ENCODE measurements at regions of chr1 and their contacts with region 1.

Region 1: GRCh38 chr1:10867138-10867721 is 70.8 kb upstream of the CASZ1 start:
- DNase-seq: peak; percentile 37 to 66
- ATAC-seq: peak; percentile 56 to 84 (median 71)
- H3K4me3 ChIP-seq: peak overlapping the region; percentile 6 to 52 (median 44)
- H3K27ac ChIP-seq: no peak overlapping the region
- H3K4me1 ChIP-seq: peaks cover 6 to 35% (median 17%) of the 10 kb centered on the region in 9 donors
- H3K27me3 ChIP-seq: peaks cover 0 to 81% (median 38%) of the 10 kb centered on the region in 7 donors
- CTCF ChIP-seq: peak; percentile 55 to 93 (median 80)

Region 2: DNA sequence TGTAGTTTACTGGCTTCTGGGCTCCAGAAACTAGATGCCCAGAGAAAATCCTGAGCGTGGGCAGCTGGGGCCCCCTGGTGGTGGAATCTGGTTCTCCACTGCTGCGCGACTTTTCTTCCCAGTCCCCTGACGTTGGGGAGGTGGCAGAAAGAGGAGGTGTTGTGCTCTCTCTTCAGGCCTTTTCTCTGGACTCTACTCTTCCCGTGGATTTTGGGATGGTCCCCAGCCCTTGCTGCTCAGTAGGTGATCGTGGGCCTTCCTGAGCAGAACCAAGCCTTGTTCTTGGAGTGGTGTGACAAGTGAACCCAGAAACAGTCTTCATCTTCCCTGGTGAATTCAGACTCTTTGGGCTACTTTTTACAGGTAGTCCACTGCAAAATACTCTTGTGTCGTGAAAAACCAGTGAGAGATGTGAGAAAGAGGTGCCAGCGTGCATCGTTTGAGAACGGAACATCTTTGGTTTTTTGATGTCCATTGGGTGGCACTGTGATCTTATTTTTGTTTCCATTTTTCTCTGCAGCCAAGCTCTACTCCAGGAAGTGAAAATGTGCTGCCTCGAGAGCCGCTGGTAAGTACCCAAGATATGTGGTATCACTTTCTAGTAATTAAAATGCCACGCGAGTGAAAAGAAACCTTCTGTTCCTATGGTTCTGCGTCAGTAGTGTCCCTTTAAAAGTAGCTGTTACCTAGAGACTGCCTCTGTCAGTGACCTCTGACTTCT is 372.3 kb before region 1 on chr1:
- intact Hi-C with region 1: loop called in 2 of 10 experiments (anchors 5 kb)
- DNase-seq: peak; percentile 65 to 68
- ATAC-seq: peak; percentile 69 to 92 (median 86)
- H3K4me3 ChIP-seq: peak overlapping the region in 6 of 10 donors; percentile 23 to 47 (median 35)
- H3K27ac ChIP-seq: peak overlapping the region in 6 of 10 donors; percentile 11 to 82 (median 51)
- H3K4me1 ChIP-seq: peaks cover 0 to 36% (median 23%) of the 10 kb centered on the region in 9 donors
- H3K27me3 ChIP-seq: no peaks in the 10 kb centered on the region
- CTCF ChIP-seq: peak; percentile 80 to 92 (median 88)

Region 3: GRCh38 chr1:10514490-10515235 is 352.6 kb before region 1 on chr1:
- intact Hi-C with region 1: loop called in 7 of 10 experiments (anchors 5 kb)
- DNase-seq: no peak
- ATAC-seq: peak in 3 of 8 donors; percentile 42 to 53 (median 43)
- H3K4me3 ChIP-seq: no peak overlapping the region
- H3K27ac ChIP-seq: peak overlapping the region in 1 of 10 donors; percentile 55
- H3K4me1 ChIP-seq: peaks cover 3 to 73% (median 43%) of the 10 kb centered on the region in 9 donors
- H3K27me3 ChIP-seq: no peaks in the 10 kb centered on the region
- CTCF ChIP-seq: peak; percentile 28 to 66 (median 59)

Region 4: GRCh38 chr1:10646347-10646861 is 220.8 kb before region 1 on chr1:
- intact Hi-C with region 1: loop called in 1 of 10 experiments (anchors 10 kb)
- DNase-seq: peak; percentile 54 to 69
- ATAC-seq: peak; percentile 72 to 87 (median 82)
- H3K4me3 ChIP-seq: no peak overlapping the region
- H3K27ac ChIP-seq: peak overlapping the region in 2 of 10 donors; percentile 32 to 53
- H3K4me1 ChIP-seq: peaks cover 0 to 18% (median 0%) of the 10 kb centered on the region in 9 donors
- H3K27me3 ChIP-seq: no peaks in the 10 kb centered on the region
- CTCF ChIP-seq: peak in 3 of 9 donors; percentile 35 to 48 (median 42)

Region 5: DNA sequence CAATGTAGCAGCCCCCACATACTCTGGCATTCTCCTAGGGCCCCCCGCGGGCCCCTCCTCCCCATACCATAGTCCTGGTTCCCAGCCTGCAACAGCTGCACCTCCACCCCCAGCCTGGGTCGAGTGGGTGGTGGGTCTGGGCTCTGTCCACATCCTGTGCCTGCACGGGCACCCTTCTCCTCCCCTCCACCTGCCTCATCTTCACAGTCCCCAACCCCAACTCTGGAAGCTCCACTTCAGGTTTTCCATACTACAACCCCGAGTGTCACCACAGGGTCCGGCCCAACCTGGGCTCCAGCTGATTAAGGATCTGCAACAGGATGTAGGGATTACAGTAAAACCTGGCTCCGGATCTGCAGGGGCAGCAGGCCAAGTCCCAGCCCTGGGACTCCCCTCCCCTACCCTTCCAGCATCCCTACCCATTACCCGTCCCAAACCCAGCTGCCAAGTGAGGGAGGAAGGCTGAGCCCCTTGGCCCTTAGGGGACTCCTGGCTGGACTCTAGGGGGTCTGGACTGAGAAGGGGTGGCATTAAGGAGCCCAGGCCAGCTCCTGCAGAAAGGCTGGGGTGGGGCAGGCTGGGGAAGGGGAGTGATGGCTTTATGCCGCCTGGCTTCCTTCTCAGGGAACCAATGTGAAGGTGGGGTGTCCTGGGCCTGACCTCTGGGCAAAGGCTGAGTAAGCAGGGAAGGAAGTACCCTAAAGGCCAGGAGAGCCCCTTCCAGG is 187.6 kb before region 1 on chr1:
- intact Hi-C with region 1: loop called in 2 of 10 experiments (anchors 10 kb)
- DNase-seq: peak in 1 of 2 donors; percentile 61
- ATAC-seq: peak in 6 of 8 donors; percentile 0 to 40 (median 22)
- H3K4me3 ChIP-seq: no peak overlapping the region
- H3K27ac ChIP-seq: peak overlapping the region in 7 of 10 donors; percentile 38 to 92 (median 52)
- H3K4me1 ChIP-seq: peaks cover 30 to 100% (median 90%) of the 10 kb centered on the region in 9 donors
- H3K27me3 ChIP-seq: no peaks in the 10 kb centered on the region
- CTCF ChIP-seq: no peak

Region 6: GRCh38 chr1:10796019-10796944 is 70.9 kb before region 1 on chr1 and contains the start of gene CASZ1:
- intact Hi-C with region 1: loop called in 5 of 10 experiments (anchors 2 to 10 kb)
- DNase-seq: peak; percentile 79 to 86
- ATAC-seq: peak; percentile 65 to 78 (median 72)
- H3K4me3 ChIP-seq: peak within 1 kb of the TSS; percentile 39 to 96 (median 79)
- H3K27ac ChIP-seq: peak within 1 kb of the TSS; percentile 71 to 99 (median 90)
- H3K4me1 ChIP-seq: peaks cover under 1 to 37% (median 24%) of the 10 kb centered on the region in 9 donors
- H3K27me3 ChIP-seq: peaks cover 0 to 90% (median 14%) of the 10 kb centered on the region in 7 donors
- CTCF ChIP-seq: no peak
- total RNA-seq, gene CASZ1: 54.4 to 79.8 (median 66.1) TPM

Region 7: DNA sequence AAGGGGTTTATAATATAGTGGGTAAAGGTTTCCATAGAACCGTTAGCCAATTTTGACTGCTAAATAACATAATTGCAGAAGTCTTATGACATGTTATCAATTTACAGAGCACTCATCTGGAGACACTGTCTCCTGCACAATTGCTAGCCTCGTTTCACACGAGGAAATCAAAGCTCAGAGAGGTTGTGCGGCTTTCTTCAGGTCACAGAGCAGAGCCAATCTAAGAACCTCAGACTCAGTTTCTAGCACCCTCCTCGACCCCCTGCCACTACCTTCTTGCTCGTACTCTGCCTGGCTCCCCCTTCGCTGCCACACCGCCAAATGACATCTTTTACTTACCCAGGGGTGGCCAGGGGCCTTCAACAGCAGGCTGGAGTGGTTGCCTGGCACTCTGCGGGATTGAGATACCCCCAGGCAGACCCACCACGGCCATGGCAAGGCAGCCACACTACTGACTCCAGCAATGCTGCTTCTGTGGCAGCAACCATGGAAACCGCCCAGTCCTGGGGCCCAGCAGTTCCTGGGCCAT is 54.8 kb before region 1 on chr1:
- intact Hi-C with region 1: no loop called
- DNase-seq: no peak
- ATAC-seq: no peak
- H3K4me3 ChIP-seq: no peak overlapping the region
- H3K27ac ChIP-seq: no peak overlapping the region
- H3K4me1 ChIP-seq: no peaks in the 10 kb centered on the region
- H3K27me3 ChIP-seq: peaks cover 0 to 30% (median 14%) of the 10 kb centered on the region in 7 donors
- CTCF ChIP-seq: no peak

Region 8: GRCh38 chr1:11961230-11961629 is 1094.0 kb after region 1 on chr1:
- intact Hi-C with region 1: loop called in 1 of 10 experiments (anchors 5 kb)
- DNase-seq: no peak
- ATAC-seq: no peak
- H3K4me3 ChIP-seq: no peak overlapping the region
- H3K27ac ChIP-seq: peak overlapping the region in 2 of 10 donors; percentile 36 to 82
- H3K4me1 ChIP-seq: peaks cover 0 to 17% (median 0%) of the 10 kb centered on the region in 9 donors
- H3K27me3 ChIP-seq: no peaks in the 10 kb centered on the region
- CTCF ChIP-seq: no peak

Measured in heart right ventricle (tissue), 16 donors.